Dendritic cell treated with granulocyte-macrophage colony-stimulating factor and Interleukin-4, amounts not matched to agents 40 ng/mL and 50 ng/mL, for 4 days (primary cell): ENCODE measurements at regions of chr11 and their contacts with region 1.

Region 1: DNA sequence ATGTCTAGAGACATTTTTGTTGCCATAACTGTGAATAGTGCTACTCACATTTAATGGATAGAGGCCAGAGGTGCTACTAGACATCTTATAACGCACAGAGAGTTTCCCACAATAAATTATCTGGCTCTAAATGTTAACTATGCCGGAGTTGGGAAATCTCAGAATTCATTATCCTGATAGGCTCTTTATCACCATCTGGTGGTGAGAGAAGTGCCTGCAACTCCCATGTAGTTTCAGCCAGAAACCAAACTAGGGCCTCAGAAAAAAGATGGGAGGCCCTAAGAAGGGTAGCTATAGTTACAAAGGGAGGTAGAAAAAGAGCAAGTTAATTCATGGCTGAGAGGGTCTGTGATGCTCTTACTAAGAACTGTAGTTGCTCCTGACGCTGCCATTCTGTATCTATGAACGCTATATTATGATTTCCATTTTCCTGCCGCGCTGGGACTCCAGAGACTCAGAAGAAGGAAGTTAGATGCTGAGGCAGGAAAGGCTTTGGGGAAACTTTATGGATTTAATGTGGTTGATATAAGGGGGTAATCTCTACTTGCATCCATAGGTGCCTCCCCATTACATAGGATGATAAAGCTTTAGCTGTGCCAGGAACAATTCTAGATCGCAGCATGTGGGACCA is 22.9 kb upstream of the MRPL17 start:
- H3K4me3 Mint-ChIP-seq: no peak overlapping the region
- H3K27ac Mint-ChIP-seq: peak overlapping the region; percentile 2
- H3K4me1 Mint-ChIP-seq: peaks cover 24% of the 10 kb centered on the region
- H3K27me3 Mint-ChIP-seq: no peaks in the 10 kb centered on the region

Region 2: GRCh38 chr11:6219359-6219758 is 486.7 kb before region 1 on chr11:
- intact Hi-C with region 1: no loop called
- H3K4me3 Mint-ChIP-seq: no peak overlapping the region
- H3K27ac Mint-ChIP-seq: no peak overlapping the region
- H3K4me1 Mint-ChIP-seq: peaks cover 33% of the 10 kb centered on the region
- H3K27me3 Mint-ChIP-seq: no peaks in the 10 kb centered on the region

Region 3: DNA sequence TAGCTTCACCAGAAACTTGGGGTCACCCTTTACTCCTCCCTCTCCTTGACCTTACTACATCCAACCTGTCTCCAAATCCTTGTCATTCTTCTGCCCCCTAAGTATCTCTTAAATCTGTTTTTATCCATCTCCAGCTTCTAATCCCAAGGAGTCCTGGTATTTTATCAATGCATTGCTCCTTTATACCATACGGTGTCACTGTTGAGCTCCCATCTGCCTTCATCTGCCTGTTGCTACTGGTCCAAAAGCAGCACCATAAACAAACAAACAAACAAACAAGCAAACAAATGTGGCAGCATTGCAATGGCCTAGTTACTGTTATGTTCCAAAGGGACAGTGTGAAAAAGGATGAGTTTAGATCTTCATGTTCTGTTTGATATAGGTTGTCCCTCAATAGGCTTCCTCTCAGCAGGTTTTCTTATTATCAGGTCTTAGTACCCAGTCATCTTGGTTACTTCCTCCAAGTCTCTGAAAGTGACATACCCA is 174.7 kb before region 1 on chr11:
- intact Hi-C with region 1: loop called (anchors 1 kb)
- H3K4me3 Mint-ChIP-seq: no peak overlapping the region
- H3K27ac Mint-ChIP-seq: no peak overlapping the region
- H3K4me1 Mint-ChIP-seq: no peaks in the 10 kb centered on the region
- H3K27me3 Mint-ChIP-seq: no peaks in the 10 kb centered on the region

Region 4: DNA sequence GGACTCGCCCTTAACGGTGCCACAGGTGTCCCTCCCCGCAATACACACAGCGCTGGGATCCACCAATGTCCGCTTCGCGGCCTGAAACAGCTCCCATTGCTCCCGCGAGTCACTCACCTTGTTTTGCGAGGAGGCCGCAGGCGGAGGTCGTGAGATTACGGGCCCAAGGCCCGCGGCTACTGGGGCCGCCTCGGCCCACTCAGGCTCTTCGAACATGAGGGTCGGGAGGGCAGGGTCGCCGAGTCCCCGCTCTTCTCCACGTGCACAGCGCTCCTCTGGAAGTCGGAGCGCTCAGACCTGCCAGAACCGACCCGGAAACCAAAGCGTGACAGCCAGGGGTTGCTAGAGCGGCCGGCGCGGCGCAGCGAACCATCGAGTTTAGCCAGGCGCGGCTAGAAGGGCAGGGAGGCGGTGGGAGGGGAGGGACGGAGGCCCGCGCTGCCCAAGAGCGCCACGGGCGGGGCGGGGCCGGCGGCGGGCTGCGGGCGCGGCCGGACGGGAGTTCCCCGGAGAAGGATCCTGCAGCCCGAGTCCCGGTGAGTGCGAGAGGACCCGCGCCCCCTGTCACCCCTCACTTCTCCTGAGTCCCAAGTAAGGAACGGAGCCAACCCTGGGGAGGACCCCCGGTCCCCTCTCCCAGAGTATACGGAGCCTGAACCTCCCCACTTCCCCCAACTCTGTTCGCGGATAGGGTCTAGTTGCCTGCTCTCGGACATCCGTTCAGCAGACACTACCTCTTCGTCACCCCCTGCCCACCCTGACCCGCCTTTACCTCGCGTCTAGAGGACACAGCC is 102.5 kb before region 1 on chr11 and contains the starts of genes ILK and RRP8:
- intact Hi-C with region 1: no loop called
- H3K4me3 Mint-ChIP-seq: no peak within 1 kb of the TSS
- H3K27ac Mint-ChIP-seq: no peak within 1 kb of the TSS
- H3K4me1 Mint-ChIP-seq: peaks cover 16% of the 10 kb centered on the region
- H3K27me3 Mint-ChIP-seq: no peaks in the 10 kb centered on the region

Region 5: DNA sequence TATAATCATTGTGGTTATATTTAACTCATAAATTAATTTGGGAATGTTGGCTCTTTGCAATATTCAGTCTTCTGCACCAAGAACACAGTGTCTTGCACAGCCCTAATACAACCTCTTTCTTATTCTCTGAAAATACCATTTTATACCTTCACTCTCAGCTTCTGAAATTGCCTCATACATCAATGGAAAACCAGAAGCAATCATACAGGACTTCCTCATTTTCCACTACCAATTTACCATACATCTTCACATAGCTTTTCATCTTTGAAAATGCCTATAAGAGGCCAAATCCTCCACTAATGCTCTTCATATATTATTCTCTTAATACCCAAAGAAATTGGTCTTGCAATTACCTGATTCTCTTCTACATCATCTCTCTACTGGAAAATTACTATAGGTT is 72.5 kb after region 1 on chr11:
- intact Hi-C with region 1: no loop called
- H3K4me3 Mint-ChIP-seq: no peak overlapping the region
- H3K27ac Mint-ChIP-seq: no peak overlapping the region
- H3K4me1 Mint-ChIP-seq: peaks cover 6% of the 10 kb centered on the region
- H3K27me3 Mint-ChIP-seq: no peaks in the 10 kb centered on the region